ENCODE measurements at regions of chr11 and their contacts with region 1.

Region 1: GRCh38 chr11:16738193-16738946 is at the start of gene C11orf58:
- DNase-seq: peak; percentile 86 to 94
- H3K4me3 ChIP-seq: peak within 1 kb of the TSS; percentile 82 to 100 (median 90)
- H3K27ac ChIP-seq: peak within 1 kb of the TSS; percentile 94
- H3K4me1 ChIP-seq: peaks cover 0 to 6% (median 3%) of the 10 kb centered on the region in 4 experiments; a peak in 4 of 7 replicates
- H3K27me3 ChIP-seq: no peaks in the 10 kb centered on the region
- CTCF ChIP-seq: no peak
- EP300 ChIP-seq: no peak
- POLR2A ChIP-seq: peak; percentile 98
- RAD21 ChIP-seq: no peak
- total RNA-seq, gene C11orf58: 161 and 181 TPM in 2 replicates

Region 2: DNA sequence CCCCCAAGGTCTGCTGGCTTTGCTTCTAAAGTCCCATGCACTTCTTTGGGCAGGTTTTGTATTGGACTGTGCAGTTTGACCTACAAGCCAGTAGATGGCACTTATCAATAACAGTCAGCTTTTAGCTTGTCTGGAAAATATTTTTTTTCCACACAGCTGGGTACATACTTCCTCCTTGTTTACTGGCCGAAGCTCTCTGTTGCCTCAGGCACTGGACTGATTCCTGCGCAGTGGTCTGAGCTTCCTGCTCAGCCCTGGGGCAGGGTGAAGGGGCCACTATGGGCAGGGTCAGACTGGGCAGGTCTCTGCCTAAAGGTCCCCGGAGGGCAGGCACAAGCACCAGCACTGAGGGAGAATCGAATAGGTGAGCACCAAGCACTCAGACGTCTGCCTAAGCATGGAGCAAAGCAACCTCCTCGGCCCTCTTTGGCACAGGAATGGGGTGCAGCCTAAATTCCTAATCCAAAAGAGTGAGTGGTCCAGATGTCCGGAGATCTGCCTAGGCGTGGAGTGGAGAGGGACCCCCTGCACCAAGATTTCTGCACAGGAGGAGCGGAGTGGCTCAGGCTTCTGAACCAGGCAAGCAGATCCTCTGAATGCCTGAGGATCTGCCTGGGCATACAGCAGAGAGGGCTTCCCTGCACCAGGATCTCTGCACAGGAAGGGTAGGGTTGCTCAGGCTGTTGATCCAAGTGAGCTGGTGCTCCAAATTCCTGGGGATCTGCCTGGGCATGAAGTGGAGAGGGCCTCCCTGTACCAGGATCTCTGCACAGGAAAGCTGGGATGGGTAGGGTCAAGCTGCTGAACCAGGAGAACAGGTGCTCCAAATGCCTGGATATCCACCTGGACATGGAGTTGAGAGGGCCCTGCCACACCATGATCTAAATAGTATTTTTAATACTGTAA is 105.8 kb before region 1 on chr11:
- CTCF ChIA-PET with region 1: interaction called, 10 read pairs
- POLR2A ChIA-PET with region 1: no interaction called
- DNase-seq: peak in 1 of 2 experiments; percentile 55
- H3K4me3 ChIP-seq: no peak overlapping the region
- H3K27ac ChIP-seq: no peak overlapping the region
- H3K4me1 ChIP-seq: no peaks in the 10 kb centered on the region
- H3K27me3 ChIP-seq: no peaks in the 10 kb centered on the region
- CTCF ChIP-seq: peak in 2 of 3 experiments; percentile 22 to 57; a peak in 2 of 4 replicates
- EP300 ChIP-seq: no peak
- POLR2A ChIP-seq: no peak
- RAD21 ChIP-seq: peak; percentile 55 to 67

Region 3: DNA sequence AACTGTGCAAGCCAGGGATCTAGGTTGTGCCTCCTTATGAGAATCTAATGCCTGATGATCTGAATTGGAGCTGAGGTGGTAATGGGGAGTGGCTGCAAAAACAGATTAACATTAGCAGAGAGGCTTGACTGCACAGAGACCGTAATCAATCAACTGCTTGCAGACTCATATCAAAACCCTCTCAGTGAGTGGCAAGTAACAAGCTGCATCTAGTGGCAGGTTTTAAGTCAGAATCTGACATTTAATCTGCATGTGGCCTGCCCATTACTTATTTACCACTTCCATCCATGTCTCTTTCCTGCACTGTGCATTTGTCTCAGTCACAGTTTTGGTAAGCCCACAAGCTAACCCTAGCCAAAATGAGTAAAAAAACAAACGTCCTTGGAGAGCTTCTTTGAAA is 11.3 kb after region 1 on chr11:
- CTCF ChIA-PET with region 1: interaction called, 3 read pairs
- POLR2A ChIA-PET with region 1: interaction called, 30 read pairs
- DNase-seq: no peak
- H3K4me3 ChIP-seq: no peak overlapping the region
- H3K27ac ChIP-seq: no peak overlapping the region
- H3K4me1 ChIP-seq: no peaks in the 10 kb centered on the region
- H3K27me3 ChIP-seq: peaks cover 0 to 1% (median 0%) of the 10 kb centered on the region in 4 experiments; a peak in 1 of 7 replicates
- CTCF ChIP-seq: no peak
- EP300 ChIP-seq: no peak
- POLR2A ChIP-seq: no peak
- RAD21 ChIP-seq: no peak

Region 4: DNA sequence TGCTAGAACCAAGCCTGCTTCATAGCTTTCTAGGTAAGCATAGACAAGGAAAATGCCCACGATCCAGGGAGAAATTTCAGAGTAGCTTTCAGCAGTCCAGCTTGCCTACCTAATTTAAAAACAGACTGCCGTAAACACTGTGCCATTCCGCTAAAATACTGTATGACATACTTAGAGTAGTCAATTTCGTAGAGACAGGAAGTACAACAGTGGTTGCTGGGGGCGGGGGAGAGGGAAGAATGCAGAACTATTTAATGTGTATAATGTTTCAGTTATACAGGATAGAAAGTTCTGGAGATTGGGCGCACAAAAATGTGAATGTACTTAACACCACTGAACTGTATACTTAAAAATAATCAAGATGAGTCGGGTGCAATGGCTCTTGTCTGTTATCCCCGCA is 56.8 kb after region 1 on chr11:
- CTCF ChIA-PET with region 1: no interaction called
- POLR2A ChIA-PET with region 1: no interaction called
- DNase-seq: no peak
- H3K4me3 ChIP-seq: no peak overlapping the region
- H3K27ac ChIP-seq: no peak overlapping the region
- H3K4me1 ChIP-seq: no peaks in the 10 kb centered on the region
- H3K27me3 ChIP-seq: no peaks in the 10 kb centered on the region
- CTCF ChIP-seq: no peak
- EP300 ChIP-seq: no peak
- POLR2A ChIP-seq: no peak
- RAD21 ChIP-seq: no peak